ENCODE measurements at regions of chr7 and their contacts with region 1.

Region 1: DNA sequence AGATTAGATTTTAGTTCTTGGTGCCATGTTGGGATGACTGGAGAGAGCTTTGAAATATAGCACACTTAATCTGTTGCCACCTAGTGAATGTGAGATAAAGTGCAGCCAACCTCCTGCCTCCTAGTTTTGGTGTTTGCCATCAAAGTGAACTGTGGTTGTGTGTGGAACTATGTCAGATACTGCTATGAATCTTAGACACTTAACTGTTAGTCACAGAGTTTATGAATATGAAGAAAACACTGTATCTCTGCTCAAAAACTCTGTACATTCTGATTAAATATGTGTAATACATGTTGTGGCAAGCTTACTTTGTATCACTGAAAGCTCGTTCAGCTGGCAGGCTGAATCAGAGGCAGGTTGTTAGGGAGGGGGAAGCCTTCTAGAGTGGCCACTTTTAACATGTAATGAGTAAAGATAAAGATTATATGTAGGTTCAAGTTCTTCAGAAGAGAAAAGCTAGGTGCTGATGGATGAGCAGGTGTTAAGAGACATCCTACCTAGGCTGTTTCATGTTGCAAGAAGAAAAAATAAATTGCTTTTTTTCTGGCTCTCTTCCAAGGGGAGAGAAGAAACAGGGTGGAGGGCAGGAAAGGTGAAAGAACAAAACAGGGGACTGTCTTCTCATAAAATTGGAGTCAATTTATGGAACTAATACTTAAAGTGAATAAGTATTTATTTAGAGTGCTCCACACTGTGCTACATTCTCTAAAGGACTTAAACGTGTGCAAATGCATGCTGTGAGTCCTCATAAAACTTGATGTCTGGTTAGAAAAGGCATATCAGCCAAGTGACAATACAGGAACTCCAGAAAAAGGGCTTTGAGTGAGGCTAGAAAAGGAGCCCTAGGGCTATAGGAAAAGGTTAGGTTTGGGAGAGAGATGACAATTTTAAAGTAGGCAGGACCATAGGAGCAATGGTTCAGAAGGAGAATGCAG is 14.1 kb upstream of the LAMB1 start:
- DNase-seq: peak; percentile 87
- H3K4me3 ChIP-seq: no peak overlapping the region
- H3K27ac ChIP-seq: peak overlapping the region; percentile 96
- H3K4me1 ChIP-seq: peaks cover 67% of the 10 kb centered on the region
- H3K27me3 ChIP-seq: no peaks in the 10 kb centered on the region
- CTCF ChIP-seq: peak; percentile 52
- POLR2A ChIP-seq: no peak

Region 2: DNA sequence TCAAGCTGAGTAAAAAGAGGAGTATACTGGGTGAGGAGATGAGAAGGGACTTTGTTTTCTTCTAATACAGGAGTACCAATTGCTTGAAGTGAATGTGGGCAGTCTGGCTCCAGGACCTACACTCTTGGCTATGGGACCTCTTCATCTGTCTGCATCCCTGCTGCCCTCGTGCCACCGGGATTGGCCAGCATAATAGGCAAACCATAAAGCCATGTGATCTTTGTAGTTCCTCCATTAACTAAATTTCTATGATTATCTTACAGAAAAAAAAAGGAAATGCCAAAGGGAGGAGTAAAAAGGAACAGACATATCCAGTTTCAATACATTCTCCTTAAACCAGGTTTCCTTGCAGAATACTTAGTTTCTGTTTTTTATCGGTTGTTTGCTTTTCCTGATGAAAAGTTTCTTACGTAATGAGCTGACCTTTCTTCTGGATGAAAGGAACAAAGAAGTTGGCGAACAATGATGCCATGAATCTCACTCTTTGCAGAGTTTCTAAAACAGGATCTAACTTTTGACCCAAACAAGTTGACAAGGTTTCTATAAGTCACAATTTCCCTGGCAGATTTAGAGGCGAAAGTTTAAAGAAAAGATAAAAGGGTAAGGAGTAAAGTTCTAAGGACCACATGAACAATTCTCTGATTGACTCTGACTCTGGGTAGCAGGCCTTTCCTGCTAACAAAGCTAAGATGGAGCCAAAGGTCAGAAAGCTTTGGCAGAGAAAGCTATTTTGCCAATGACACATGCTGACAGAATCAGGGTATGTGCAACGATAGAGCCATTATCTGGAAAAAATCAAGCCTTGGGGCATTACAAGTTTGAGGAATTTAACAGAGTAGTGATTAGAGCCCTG is 68.2 kb before region 1 on chr7:
- CTCF ChIA-PET with region 1: interaction called, 4 read pairs
- POLR2A ChIA-PET with region 1: no interaction called
- dilution Hi-C with region 1: no loop called
- intact Hi-C with region 1: loop called (anchors 2 kb)
- DNase-seq: peak; percentile 97
- H3K4me3 ChIP-seq: no peak overlapping the region
- H3K27ac ChIP-seq: peak overlapping the region; percentile 89
- H3K4me1 ChIP-seq: peaks cover 98% of the 10 kb centered on the region
- H3K27me3 ChIP-seq: no peaks in the 10 kb centered on the region
- CTCF ChIP-seq: no peak
- POLR2A ChIP-seq: peak; percentile 59

Region 3: GRCh38 chr7:107989618-107990373 is 27.3 kb before region 1 on chr7:
- CTCF ChIA-PET with region 1: interaction called, 284 read pairs
- POLR2A ChIA-PET with region 1: interaction called, 4 read pairs
- dilution Hi-C with region 1: no loop called
- intact Hi-C with region 1: no loop called
- DNase-seq: peak; percentile 48
- H3K4me3 ChIP-seq: no peak overlapping the region
- H3K27ac ChIP-seq: peak overlapping the region; percentile 41
- H3K4me1 ChIP-seq: peaks cover 25% of the 10 kb centered on the region
- H3K27me3 ChIP-seq: no peaks in the 10 kb centered on the region
- CTCF ChIP-seq: no peak
- POLR2A ChIP-seq: peak; percentile 29

Region 4: GRCh38 chr7:108002726-108003598 is 14.1 kb before region 1 on chr7 and contains the start of gene LAMB1:
- CTCF ChIA-PET with region 1: interaction called, 284 read pairs
- POLR2A ChIA-PET with region 1: interaction called, 49 read pairs
- dilution Hi-C with region 1: no loop called
- intact Hi-C with region 1: loop called (anchors 1 kb)
- DNase-seq: peak; percentile 83
- H3K4me3 ChIP-seq: peak within 1 kb of the TSS; percentile 84 to 95 (median 90)
- H3K27ac ChIP-seq: peak within 1 kb of the TSS; percentile 99
- H3K4me1 ChIP-seq: peaks cover 45% of the 10 kb centered on the region
- H3K27me3 ChIP-seq: no peaks in the 10 kb centered on the region
- CTCF ChIP-seq: no peak
- POLR2A ChIP-seq: peak; percentile 97
- total RNA-seq, gene LAMB1: 703 and 734 TPM in 2 replicates

Region 5: DNA sequence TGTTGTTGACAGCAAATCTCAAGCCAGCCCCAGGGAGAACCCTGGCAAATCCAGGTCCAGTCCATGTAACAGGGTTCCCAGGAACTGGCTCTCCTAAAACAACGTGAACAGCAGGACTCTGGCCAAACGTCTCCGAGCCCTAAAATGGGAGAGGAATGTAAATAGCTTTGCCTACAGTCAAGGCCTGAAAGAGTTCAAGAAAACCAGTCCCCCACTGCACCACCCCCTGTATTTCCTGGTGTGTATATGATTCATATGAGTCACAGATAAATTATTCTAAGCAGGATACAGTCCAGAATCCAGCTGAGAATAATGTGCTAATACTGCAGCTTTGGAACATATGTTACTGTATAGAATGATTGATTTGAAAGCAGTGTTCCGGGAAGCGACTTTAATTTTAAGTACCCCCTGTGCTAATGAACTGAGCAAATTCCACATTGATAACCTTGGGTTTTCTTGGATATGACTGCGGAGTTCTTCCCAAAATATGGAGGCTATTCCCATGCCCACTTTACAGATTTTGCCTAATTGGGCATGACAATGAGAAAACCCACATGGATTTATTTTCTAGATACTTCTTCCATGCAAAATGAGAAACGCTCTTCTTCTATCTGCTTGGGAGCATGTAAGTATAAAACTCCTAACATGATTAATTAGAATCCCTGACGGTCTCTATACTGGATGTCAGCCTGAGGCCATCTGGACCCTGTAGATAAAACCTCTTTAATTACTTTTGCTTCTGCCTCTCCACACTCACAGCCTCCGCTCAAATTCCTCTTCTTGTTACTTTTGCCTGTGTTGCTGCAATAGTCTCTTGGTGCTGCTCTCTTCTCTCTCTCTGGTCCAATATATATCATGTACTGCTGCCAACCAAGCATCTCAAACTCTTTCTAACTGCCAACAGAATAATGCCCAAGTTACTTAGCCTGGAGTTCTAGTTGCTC is 62.8 kb after region 1 on chr7:
- CTCF ChIA-PET with region 1: interaction called, 10 read pairs
- POLR2A ChIA-PET with region 1: interaction called, 5 read pairs
- dilution Hi-C with region 1: no loop called
- intact Hi-C with region 1: no loop called
- DNase-seq: peak; percentile 87
- H3K4me3 ChIP-seq: peak overlapping the region in 1 of 3 experiments; percentile 13
- H3K27ac ChIP-seq: peak overlapping the region; percentile 92
- H3K4me1 ChIP-seq: peaks cover 40% of the 10 kb centered on the region
- H3K27me3 ChIP-seq: no peaks in the 10 kb centered on the region
- CTCF ChIP-seq: no peak
- POLR2A ChIP-seq: peak; percentile 54

Measured in endothelial cell of umbilical vein (primary cell).